Activated T-helper 1 cell treated with anti-CD3 and anti-CD28 coated beads, Interleukin-12 subunit alpha, Interleukin-12 subunit beta, Interleukin-2, Interleukin-4 antibody, amounts not matched to agents 30 ng/mL and 10 ng/mL and 1 ng/mL, durations not matched to agents 14 hours and 24 hours and 36 hours (primary cell): ENCODE measurements at regions of chr10 and their contacts with region 1.

Region 1: GRCh38 chr10:103192451-103193106 is 493 bp downstream of the NT5C2 start:
- DNase-seq: peak; percentile 64
- H3K4me3 Mint-ChIP-seq: peak overlapping the region; percentile 96
- H3K27ac Mint-ChIP-seq: peak overlapping the region; percentile 99
- H3K4me1 Mint-ChIP-seq: peaks cover 45% of the 10 kb centered on the region
- H3K27me3 Mint-ChIP-seq: no peaks in the 10 kb centered on the region

Region 2: DNA sequence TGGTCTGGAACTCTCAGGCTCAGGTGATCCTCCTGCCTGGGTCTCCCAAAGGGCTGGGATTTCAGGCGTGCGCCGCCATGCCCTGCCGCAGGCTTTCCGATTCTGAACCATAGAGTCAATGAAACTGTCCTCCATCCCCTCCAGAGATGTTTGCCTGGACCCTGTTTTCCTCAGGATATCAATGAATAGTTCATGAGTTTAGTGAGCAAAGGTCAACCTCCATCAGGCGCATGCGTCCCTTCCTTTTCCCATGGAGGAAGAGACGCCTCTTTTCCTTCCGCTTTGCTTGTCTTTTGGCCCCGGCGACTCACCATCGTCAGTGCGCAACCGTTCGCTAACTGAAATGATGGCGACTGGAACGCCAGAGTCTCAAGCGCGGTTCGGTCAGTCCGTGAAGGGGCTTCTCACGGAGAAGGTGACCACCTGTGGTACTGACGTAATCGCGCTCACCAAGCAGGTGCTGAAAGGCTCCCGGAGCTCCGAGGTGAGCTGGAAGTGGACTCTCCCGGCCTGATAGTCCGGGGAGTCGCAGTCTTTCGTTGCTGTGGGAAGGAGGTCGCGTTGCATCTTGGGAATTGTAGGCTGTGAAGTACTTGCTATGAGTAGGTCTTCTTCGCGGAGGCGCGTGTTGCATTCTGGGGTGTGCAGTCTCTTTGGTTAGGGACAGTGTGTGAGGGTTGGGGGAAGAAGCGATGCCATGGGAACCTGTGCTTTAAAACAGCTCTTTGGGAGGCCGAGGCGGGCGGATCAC is 338.5 kb before region 1 on chr10 and contains the start of gene BORCS7:
- intact Hi-C with region 1: loop called (anchors 2 kb)
- DNase-seq: peak; percentile 84
- H3K4me3 Mint-ChIP-seq: peak within 1 kb of the TSS; percentile 82
- H3K27ac Mint-ChIP-seq: peak within 1 kb of the TSS; percentile 92
- H3K4me1 Mint-ChIP-seq: peaks cover 19% of the 10 kb centered on the region
- H3K27me3 Mint-ChIP-seq: no peaks in the 10 kb centered on the region
- total RNA-seq, gene BORCS7: 9.7 and 12.6 TPM in 2 replicates

Region 3: DNA sequence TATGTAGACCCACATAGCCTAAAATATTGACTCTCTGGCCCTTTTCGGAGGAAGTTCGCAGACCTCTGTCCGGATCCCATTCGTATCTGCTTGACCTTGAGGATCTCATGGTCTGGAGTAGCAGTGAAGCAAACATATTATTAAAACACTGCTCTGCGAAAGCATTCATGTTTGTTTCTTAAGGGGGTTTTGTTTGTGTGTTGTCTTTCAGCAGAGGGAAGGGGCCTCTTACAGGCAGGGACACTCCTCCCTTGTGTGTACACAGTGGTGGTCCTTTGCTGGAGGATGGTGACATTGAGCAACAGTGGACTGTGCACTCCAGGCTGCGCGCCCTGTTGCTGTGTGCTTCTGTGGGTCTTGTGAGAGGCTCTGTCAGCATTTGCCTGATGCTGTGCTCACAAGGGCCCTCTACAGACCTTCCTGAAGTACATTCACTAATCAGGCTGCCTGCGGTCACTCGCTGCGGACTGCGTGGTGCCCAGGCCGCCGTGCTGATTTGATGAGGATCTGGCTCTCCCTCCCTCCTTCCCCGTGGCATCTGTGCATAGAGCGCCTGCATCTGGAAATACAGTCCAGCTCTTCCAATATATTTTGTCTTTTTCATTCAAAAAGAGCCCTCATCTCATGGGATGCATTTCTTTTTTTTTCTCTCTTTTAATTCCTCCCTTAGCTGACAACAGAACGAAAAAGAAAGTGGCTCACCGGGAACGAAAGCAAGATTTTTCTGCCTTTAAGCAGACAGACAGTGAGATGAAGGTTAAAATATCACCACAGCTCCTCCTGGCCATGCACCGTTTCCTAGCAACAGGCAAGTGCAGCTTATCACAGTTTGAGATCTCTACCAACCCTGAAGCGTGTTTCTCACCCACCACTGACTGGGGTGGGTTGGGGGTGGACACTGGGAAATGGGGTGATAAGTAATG is 138.7 kb before region 1 on chr10:
- intact Hi-C with region 1: loop called (anchors 5 kb)
- DNase-seq: peak; percentile 69
- H3K4me3 Mint-ChIP-seq: peak overlapping the region; percentile 83
- H3K27ac Mint-ChIP-seq: peak overlapping the region; percentile 92
- H3K4me1 Mint-ChIP-seq: peaks cover 25% of the 10 kb centered on the region
- H3K27me3 Mint-ChIP-seq: no peaks in the 10 kb centered on the region

Region 4: DNA sequence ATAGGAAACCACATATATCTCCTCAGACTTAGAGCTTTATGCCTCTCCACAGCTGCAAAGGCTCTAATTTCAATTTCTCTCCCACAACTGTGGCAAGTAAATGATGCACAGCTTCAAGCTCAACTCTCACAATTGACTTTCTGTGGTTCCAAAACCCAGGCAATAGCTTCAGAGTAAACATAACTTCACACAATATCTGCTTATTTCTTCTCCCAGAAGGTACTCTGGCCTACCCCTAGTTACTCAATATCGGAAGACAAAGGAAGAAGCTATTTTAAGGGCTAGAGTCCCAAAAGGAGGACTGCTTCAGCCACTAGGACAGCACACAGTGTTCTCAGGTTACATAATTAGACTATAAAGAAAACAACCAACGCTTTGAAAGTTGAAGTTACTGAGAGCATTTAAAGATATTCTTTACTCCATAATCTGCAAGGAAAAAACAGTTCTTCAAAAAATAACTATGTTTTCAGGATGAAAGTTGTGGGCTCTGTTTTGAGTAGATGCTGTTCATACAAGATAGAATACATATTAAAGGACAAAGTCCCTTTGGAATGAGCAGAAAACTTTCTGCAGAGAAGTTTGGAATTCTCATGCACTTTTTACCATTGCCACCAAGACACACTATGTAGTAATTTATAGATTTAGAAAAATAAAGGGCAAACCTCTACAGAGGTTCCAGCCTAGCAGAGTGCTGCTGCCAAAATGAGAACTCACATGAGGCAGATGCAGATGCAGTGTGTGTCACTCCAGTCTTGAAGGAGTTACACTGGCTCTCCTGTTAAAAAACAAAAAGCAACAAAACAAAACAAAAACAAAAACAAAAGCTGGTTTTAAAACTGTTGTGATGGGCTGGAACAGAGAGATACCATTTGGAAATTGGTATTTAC is 81.3 kb before region 1 on chr10:
- intact Hi-C with region 1: loop called (anchors 5 kb)
- DNase-seq: no peak
- H3K4me3 Mint-ChIP-seq: no peak overlapping the region
- H3K27ac Mint-ChIP-seq: no peak overlapping the region
- H3K4me1 Mint-ChIP-seq: peaks cover 18% of the 10 kb centered on the region
- H3K27me3 Mint-ChIP-seq: no peaks in the 10 kb centered on the region

Region 5: DNA sequence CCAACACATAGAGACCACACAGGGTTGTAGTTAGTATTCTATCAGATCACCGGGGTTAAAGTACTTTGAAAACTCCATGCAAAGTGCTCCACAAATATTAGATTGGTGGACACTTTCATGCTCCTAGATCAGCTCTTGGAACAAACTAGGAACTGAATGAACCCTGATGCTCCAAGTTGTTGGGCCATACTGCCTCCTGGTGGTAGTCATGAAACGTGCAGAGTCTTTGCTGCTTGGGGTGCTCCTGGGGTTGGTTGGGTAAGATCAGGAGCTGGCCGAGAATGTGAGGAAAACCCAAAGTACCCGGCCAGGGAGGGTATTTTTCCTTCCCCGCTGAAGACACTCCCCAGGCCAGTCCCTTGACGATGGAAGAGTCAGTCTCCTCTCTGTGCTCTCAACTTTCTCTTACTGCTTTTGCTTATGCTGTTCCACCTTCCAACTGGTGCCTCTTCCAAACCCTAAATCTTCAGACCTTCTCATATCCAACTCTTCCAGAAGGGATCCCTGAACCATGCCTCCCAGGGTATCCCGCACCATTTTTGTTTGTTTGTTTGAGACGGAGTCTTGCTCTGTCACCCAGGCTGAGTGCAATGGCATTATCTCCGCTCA is 52.2 kb after region 1 on chr10:
- intact Hi-C with region 1: loop called (anchors 5 kb)
- DNase-seq: peak; percentile 50
- H3K4me3 Mint-ChIP-seq: no peak overlapping the region
- H3K27ac Mint-ChIP-seq: no peak overlapping the region
- H3K4me1 Mint-ChIP-seq: peaks cover 31% of the 10 kb centered on the region
- H3K27me3 Mint-ChIP-seq: peaks cover 6% of the 10 kb centered on the region

Region 6: GRCh38 chr10:103333925-103334520 is 141.4 kb after region 1 on chr10:
- intact Hi-C with region 1: no loop called
- DNase-seq: no peak
- H3K4me3 Mint-ChIP-seq: no peak overlapping the region
- H3K27ac Mint-ChIP-seq: no peak overlapping the region
- H3K4me1 Mint-ChIP-seq: no peaks in the 10 kb centered on the region
- H3K27me3 Mint-ChIP-seq: no peaks in the 10 kb centered on the region